ENCODE measurements at regions of chr1 and their contacts with region 1.

Region 1: DNA sequence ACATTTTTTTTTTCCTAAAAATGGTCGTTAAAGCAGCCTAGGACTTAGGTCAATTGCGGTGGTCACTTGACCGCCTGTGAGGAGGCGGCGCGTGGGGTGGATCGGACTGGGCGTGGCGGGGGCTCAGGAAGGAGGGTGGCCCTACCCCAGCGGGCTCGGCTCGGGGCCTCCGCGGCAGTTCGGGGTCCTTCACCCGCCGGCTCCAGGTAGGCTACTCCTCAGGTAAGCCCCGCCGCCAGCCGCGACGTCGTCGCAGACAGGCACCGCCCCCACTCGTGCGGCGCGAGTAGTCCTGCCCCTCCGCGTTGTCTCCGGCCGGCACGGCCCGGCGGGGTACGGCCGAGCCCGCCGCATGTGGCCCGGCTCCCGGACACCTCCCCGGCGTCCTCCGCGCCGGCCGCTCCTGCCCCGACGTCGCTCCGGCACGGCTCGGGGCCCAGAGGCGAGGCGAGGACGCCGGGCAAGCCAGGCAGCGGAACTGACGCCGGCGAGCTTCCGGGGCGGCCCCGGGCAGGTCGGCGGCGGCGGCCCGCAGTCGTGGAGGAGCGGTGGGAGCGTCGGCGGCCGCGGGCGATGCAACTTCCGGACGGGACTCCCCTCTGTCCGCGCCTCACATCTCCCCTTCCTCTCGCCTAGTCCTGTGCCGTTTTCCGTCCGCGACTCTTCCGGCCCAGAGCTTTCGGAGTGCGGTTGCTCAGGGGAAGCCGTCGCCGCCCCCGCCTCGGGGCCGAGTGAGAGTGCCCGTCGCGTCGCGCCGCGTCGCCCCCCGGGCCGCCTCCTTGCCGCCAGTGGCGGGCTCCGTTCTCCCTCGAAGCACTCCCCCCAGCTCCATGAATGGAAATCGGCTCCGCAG is at the start of gene AGO3:
- DNase-seq: peak; percentile 53 to 93 (median 85)

Region 2: DNA sequence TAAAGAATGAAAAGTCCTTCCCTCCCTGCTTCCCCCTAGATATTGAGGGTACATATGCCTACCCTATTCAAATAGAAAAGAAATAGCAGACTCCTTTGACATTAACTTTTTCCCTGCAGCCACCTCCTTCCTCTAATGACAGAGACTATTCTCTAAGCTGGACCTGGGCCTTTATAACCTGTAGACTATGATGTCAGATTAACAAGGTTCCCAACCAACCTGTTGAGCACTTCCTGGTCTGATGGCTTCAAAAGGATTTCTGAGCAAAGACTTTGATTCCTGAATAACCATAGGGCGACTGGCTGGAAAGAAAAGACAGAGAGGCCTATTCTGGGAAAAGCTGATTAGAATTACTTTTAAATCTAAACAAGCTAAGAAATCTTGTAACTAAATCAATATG is 193.7 kb before region 1 on chr1:
- intact Hi-C with region 1: no loop called
- DNase-seq: no peak

Region 3: GRCh38 chr1:35882945-35883634 is 47.7 kb before region 1 on chr1 and contains the start of gene AGO1:
- intact Hi-C with region 1: loop called (anchors 2 kb)
- DNase-seq: peak; percentile 86 to 99 (median 96)

Region 4: DNA sequence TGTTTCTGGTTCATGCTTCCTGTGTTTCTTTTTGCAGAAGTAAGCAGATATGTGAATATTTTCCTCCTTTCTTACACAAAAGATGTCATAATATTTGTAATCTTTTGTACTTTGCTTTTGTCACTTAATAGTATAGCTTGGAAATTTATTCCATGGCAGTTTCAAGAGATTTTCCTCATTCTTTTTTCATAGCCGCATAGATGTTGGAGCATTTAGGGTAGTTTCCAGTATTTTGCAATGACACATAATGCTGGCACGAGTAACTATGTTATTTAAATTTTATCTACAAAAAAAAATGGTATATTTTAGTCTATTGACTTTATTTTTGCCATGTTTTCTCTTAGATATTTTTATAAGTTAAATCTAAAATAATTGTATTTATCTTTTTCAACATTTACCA is 40.8 kb after region 1 on chr1:
- intact Hi-C with region 1: no loop called
- DNase-seq: no peak

Region 5: DNA sequence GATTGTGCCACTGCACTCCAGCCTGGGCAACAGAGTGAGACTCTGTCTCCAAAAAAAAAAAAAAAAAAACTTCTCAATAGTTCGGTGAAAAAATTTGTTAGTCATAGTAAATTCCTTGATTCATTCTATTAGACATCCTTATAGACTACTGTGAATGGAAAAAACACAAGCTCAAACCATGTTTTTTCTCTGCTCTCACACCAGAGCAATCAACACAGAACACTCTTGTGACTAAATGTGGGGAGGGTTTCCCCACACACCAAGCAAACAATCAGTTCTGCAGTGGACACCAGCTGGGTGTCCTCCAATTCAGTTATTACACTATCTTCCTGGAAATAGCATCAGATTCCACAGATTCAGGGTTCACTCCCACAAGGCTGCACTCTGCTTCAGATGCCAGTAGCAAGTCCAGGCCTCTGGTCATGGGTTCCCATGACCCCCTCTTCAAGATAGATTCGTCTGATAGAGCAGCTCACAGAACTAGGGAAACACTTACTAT is 84.0 kb after region 1 on chr1:
- intact Hi-C with region 1: no loop called
- DNase-seq: no peak

Region 6: GRCh38 chr1:36088575-36089443 is 158.0 kb after region 1 on chr1 and contains the start of gene ADPRS:
- intact Hi-C with region 1: loop called (anchors 10 kb)
- DNase-seq: peak; percentile 65 to 95 (median 90)

Measured in head of caudate nucleus (tissue), 42 donors.